Upper lobe of right lung (tissue), 1 donor: ENCODE measurements at regions of chr17 and their contacts with region 1.

Region 1: GRCh38 chr17:77429919-77430752 is 289.4 kb downstream of the SEC14L1 start:
- DNase-seq: peak; percentile 91
- ATAC-seq: peak; percentile 75
- H3K4me3 ChIP-seq: no peak overlapping the region
- H3K27ac ChIP-seq: peak overlapping the region; percentile 58
- H3K4me1 ChIP-seq: peaks cover 82% of the 10 kb centered on the region
- H3K27me3 ChIP-seq: no peaks in the 10 kb centered on the region
- CTCF ChIP-seq: peak; percentile 81

Region 2: DNA sequence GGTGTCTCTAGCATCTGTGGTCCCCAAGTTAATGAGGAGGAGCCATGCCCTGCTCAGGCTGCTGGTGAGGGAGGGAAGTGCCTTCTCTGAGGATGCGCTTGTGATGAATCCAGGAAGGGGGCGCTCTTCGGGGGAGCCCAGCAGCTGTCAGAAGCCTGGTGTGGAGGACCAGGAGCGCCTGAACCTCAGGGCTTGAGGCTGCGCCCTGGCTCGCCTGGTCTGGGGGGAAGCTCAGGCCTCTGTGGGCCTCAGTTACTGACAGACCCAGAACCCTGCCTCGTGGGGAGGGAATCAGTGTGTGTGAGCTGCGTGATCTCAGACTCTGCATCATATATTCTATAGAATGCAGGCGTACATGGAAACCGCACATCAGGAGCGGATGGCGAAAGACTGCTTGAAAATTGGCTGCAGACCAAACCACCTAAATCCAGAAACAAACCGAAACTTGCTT is 163.2 kb before region 1 on chr17:
- intact Hi-C with region 1: no loop called
- DNase-seq: no peak
- ATAC-seq: peak; percentile 55
- H3K4me3 ChIP-seq: no peak overlapping the region
- H3K27ac ChIP-seq: no peak overlapping the region
- H3K4me1 ChIP-seq: no peaks in the 10 kb centered on the region
- H3K27me3 ChIP-seq: no peaks in the 10 kb centered on the region
- CTCF ChIP-seq: no peak

Region 3: DNA sequence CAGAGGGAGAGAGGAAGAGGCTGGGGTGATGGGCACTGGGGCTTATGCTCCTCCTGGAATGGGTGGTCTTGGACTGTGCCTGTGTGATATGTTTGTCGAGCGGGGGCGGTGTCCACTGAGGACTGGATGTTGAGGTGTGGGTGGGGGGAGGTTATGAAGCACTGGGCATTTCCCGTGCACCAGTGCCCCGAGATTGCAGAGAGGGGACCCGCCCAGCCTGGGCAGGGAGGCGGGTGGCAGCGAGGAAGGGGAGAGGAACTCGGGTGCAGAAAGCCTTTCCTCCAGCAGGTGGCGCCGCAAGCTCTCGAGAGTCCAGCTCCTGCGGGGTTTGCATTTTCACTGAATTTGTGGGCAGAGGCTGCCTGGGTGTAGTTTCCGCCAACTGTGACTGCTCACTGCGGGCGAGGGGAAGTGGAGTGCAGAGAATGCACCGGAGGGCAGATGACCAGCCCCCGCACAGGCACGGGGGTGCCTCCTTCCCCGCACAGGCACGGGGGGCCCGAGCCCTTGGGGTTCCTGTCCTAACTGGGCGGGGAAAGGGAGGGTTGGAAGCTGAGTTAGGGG is 98.8 kb before region 1 on chr17:
- intact Hi-C with region 1: loop called (anchors 10 kb)
- DNase-seq: peak; percentile 95
- ATAC-seq: peak; percentile 97
- H3K4me3 ChIP-seq: peak overlapping the region; percentile 38
- H3K27ac ChIP-seq: peak overlapping the region; percentile 51
- H3K4me1 ChIP-seq: peaks cover 8% of the 10 kb centered on the region
- H3K27me3 ChIP-seq: no peaks in the 10 kb centered on the region
- CTCF ChIP-seq: peak; percentile 93

Region 4: DNA sequence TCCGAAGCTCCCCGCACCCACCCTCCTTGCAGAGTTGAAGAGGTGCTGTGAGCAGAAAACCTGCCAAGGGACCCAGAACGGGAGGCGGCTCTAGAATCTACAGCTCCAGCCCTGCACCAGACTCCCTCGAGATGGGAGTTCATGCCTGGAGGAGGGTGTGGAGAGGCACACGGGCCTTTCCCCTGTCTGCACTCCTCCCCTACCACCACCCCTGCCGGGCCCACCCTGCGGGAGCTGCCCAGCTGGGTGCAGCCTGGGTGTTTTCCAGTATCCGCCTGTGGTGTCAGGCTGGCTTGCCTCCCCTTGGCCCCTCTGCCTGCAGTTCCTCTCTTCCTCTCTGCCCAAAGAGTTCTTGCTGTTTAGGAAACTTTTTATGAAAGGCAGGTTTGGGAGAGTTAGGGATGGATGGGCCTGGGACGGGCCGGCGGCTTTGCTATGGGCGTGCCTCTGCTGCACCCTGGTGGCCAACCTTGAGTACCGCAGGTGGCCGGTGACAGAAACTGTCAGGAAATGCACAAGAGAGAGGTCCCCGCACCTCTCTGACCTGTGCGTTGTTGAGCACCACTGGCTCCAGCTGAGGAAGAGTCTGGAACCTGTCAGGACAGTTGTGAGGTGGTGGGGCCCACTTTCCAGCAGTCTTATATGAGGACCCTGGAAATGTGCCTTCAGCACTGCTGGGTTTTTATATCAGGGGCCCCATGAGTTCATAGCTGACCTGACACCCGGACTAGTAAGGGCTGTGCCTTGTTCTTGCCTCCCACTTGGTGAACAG is 64.7 kb after region 1 on chr17:
- intact Hi-C with region 1: loop called (anchors 5 kb)
- DNase-seq: peak; percentile 87
- ATAC-seq: peak; percentile 89
- H3K4me3 ChIP-seq: no peak overlapping the region
- H3K27ac ChIP-seq: no peak overlapping the region
- H3K4me1 ChIP-seq: peaks cover 27% of the 10 kb centered on the region
- H3K27me3 ChIP-seq: no peaks in the 10 kb centered on the region
- CTCF ChIP-seq: peak; percentile 97

Region 5: GRCh38 chr17:77634710-77635109 is 204.6 kb after region 1 on chr17:
- intact Hi-C with region 1: no loop called
- DNase-seq: no peak
- ATAC-seq: no peak
- H3K4me3 ChIP-seq: no peak overlapping the region
- H3K27ac ChIP-seq: no peak overlapping the region
- H3K4me1 ChIP-seq: no peaks in the 10 kb centered on the region
- H3K27me3 ChIP-seq: peaks cover 15% of the 10 kb centered on the region
- CTCF ChIP-seq: no peak